ENCODE measurements at regions of chr11 and their contacts with region 1.

Region 1: GRCh38 chr11:61733120-61733978 is 19.1 kb upstream of the MYRF start:
- DNase-seq: peak; percentile 86 to 87 (median 87)
- ATAC-seq: peak; percentile 89 to 98 (median 95)
- H3K4me3 ChIP-seq: no peak overlapping the region
- H3K27ac ChIP-seq: no peak overlapping the region
- H3K4me1 ChIP-seq: no peaks in the 10 kb centered on the region
- H3K27me3 ChIP-seq: no peaks in the 10 kb centered on the region
- CTCF ChIP-seq: peak; percentile 97 to 100 (median 99)
- POLR2A ChIP-seq: no peak

Region 2: GRCh38 chr11:61041755-61042518 is 691.4 kb before region 1 on chr11:
- intact Hi-C with region 1: no loop called
- DNase-seq: no peak
- ATAC-seq: peak; percentile 71 to 85 (median 82)
- H3K4me3 ChIP-seq: no peak overlapping the region
- H3K27ac ChIP-seq: peak overlapping the region in 1 of 3 donors; percentile 24
- H3K4me1 ChIP-seq: no peaks in the 10 kb centered on the region
- H3K27me3 ChIP-seq: no peaks in the 10 kb centered on the region
- CTCF ChIP-seq: no peak
- POLR2A ChIP-seq: no peak

Region 3: GRCh38 chr11:61679893-61680621 is 53.3 kb before region 1 on chr11 and contains the start of gene DAGLA:
- intact Hi-C with region 1: loop called in 1 of 2 experiments (anchors 10 kb)
- DNase-seq: peak; percentile 67 to 70 (median 67)
- ATAC-seq: peak; percentile 69 to 92 (median 80)
- H3K4me3 ChIP-seq: peak within 1 kb of the TSS; percentile 21 to 51 (median 29)
- H3K27ac ChIP-seq: no peak within 1 kb of the TSS
- H3K4me1 ChIP-seq: no peaks in the 10 kb centered on the region
- H3K27me3 ChIP-seq: no peaks in the 10 kb centered on the region
- CTCF ChIP-seq: peak; percentile 76 to 98 (median 97)
- POLR2A ChIP-seq: no peak
- total RNA-seq, gene DAGLA: 0.33 to 5.5 (median 0.79) TPM

Region 4: DNA sequence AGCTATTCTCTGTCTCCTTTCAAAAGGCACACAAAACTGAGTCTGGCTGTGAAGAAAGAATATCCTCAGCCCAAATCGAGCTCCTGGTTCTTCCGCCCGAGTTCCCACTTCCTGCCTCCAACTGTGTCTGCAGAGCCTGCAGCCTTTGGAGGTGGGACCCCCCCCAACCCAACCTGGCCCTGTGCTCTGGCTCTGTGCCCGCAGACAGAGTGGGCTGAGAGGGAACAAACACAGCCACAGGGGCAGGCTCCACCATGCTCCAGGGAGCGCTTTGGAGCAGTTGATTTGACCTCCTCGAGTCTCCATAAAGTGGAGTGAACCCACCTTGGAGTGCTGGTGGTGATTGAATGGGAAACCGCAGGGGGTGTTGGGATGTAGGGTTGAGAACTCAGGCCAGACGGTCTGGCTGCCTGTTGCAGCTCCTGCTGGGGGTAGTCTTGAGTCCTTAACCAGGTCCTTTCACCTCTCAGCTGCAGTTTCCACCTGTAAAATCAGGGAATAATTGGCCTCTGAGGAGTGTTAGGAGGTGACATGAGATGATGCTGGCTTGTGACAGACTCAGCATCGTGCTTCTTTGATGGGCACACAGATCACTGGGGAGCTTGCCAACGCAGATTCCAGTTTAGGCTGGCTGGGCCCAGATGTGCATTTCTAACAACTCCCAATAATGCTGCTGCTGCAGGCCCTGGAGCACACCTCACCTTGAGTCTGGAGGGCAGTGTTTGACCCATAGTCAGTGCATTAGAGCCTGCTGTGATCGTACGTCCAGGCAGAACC is 41.8 kb before region 1 on chr11:
- intact Hi-C with region 1: no loop called
- DNase-seq: no peak
- ATAC-seq: no peak
- H3K4me3 ChIP-seq: no peak overlapping the region
- H3K27ac ChIP-seq: no peak overlapping the region
- H3K4me1 ChIP-seq: no peaks in the 10 kb centered on the region
- H3K27me3 ChIP-seq: no peaks in the 10 kb centered on the region
- CTCF ChIP-seq: no peak
- POLR2A ChIP-seq: no peak

Region 5: GRCh38 chr11:61827571-61828378 is 94.4 kb after region 1 on chr11 and contains the start of gene FADS2:
- intact Hi-C with region 1: no loop called
- DNase-seq: peak; percentile 86 to 96 (median 91)
- ATAC-seq: peak; percentile 78 to 86 (median 82)
- H3K4me3 ChIP-seq: peak within 1 kb of the TSS; percentile 56 to 62 (median 57)
- H3K27ac ChIP-seq: peak within 1 kb of the TSS; percentile 55 to 88 (median 64)
- H3K4me1 ChIP-seq: peaks cover 0 to 20% (median 9%) of the 10 kb centered on the region in 4 donors
- H3K27me3 ChIP-seq: no peaks in the 10 kb centered on the region
- CTCF ChIP-seq: no peak
- POLR2A ChIP-seq: no peak
- total RNA-seq, gene FADS2: 4.2 to 166 (median 110) TPM

Measured in right lobe of liver (tissue), 6 donors.